ENCODE measurements at regions of chr3 and their contacts with region 1.

Region 1: GRCh38 chr3:22244761-22245521 is 493.9 kb upstream of the ZNF385D start:
- DNase-seq: peak; percentile 84
- H3K4me3 ChIP-seq: no peak overlapping the region
- H3K27ac ChIP-seq: peak overlapping the region; percentile 32
- H3K4me1 ChIP-seq: peaks cover 16% of the 10 kb centered on the region
- H3K27me3 ChIP-seq: no peaks in the 10 kb centered on the region
- CTCF ChIP-seq: no peak

Region 2: DNA sequence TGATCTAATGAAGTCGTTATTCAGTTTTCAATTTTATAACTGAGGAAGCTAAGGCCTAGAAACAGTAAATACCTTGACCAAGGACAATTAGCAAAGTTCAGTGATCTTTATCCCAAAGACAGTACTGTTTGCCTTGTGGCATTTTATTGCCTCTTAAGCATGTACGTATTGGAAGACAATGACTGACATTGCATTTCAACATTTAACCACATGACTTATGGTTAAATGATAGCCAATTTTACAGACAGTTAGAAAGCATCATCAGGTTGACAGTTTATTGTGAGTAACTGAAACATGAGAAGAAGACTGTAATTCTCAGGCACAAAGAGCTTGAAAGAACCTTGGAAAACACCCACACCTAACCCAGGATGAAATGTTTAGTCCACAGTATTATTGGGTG is 103.2 kb before region 1 on chr3:
- CTCF ChIA-PET with region 1: no interaction called
- dilution Hi-C with region 1: no loop called
- in situ Hi-C with region 1: no loop called
- intact Hi-C with region 1: no loop called
- DNase-seq: no peak
- H3K4me3 ChIP-seq: no peak overlapping the region
- H3K27ac ChIP-seq: no peak overlapping the region
- H3K4me1 ChIP-seq: no peaks in the 10 kb centered on the region
- H3K27me3 ChIP-seq: no peaks in the 10 kb centered on the region
- CTCF ChIP-seq: no peak

Region 3: GRCh38 chr3:22269831-22270230 is 24.9 kb after region 1 on chr3:
- CTCF ChIA-PET with region 1: no interaction called
- dilution Hi-C with region 1: no loop called
- in situ Hi-C with region 1: no loop called
- intact Hi-C with region 1: no loop called
- DNase-seq: peak; percentile 9
- H3K4me3 ChIP-seq: no peak overlapping the region
- H3K27ac ChIP-seq: no peak overlapping the region
- H3K4me1 ChIP-seq: no peaks in the 10 kb centered on the region
- H3K27me3 ChIP-seq: peaks cover 2% of the 10 kb centered on the region
- CTCF ChIP-seq: no peak

Region 4: DNA sequence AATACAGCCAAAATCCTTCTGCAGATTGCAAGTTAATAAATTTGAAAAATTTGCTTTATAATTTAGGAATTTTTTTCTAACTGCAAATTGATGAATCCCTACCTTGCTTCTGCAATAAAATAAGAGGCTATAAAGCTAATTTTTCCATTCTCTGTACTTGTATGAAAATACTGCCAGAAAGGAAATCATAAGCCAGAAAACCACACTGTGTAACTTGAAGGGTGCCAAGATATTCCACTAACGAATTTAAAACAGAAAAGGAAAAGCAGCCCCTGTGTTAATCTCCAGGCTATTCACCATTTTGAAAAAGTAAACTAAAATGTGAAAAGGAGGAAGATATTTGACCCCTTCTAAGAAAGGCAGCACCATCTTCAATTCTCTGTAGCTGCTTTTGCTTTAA is 63.9 kb after region 1 on chr3:
- CTCF ChIA-PET with region 1: no interaction called
- dilution Hi-C with region 1: no loop called
- in situ Hi-C with region 1: no loop called
- intact Hi-C with region 1: no loop called
- DNase-seq: no peak
- H3K4me3 ChIP-seq: no peak overlapping the region
- H3K27ac ChIP-seq: no peak overlapping the region
- H3K4me1 ChIP-seq: no peaks in the 10 kb centered on the region
- H3K27me3 ChIP-seq: peaks cover 1% of the 10 kb centered on the region
- CTCF ChIP-seq: no peak

Region 5: GRCh38 chr3:22319446-22319845 is 74.5 kb after region 1 on chr3:
- CTCF ChIA-PET with region 1: no interaction called
- dilution Hi-C with region 1: no loop called
- in situ Hi-C with region 1: no loop called
- intact Hi-C with region 1: loop called (anchors 5 kb)
- DNase-seq: no peak
- H3K4me3 ChIP-seq: no peak overlapping the region
- H3K27ac ChIP-seq: no peak overlapping the region
- H3K4me1 ChIP-seq: no peaks in the 10 kb centered on the region
- H3K27me3 ChIP-seq: peaks cover 3% of the 10 kb centered on the region
- CTCF ChIP-seq: no peak

Region 6: GRCh38 chr3:22620498-22620897 is 375.6 kb after region 1 on chr3:
- CTCF ChIA-PET with region 1: no interaction called
- dilution Hi-C with region 1: no loop called
- in situ Hi-C with region 1: no loop called
- intact Hi-C with region 1: no loop called
- DNase-seq: no peak
- H3K4me3 ChIP-seq: no peak overlapping the region
- H3K27ac ChIP-seq: no peak overlapping the region
- H3K4me1 ChIP-seq: peaks cover 6% of the 10 kb centered on the region
- H3K27me3 ChIP-seq: no peaks in the 10 kb centered on the region
- CTCF ChIP-seq: no peak

Measured in mammary epithelial cell (primary cell).